Motor neuron (in vitro differentiated cells): ENCODE measurements at regions of chr7 and their contacts with region 1.

Region 1: DNA sequence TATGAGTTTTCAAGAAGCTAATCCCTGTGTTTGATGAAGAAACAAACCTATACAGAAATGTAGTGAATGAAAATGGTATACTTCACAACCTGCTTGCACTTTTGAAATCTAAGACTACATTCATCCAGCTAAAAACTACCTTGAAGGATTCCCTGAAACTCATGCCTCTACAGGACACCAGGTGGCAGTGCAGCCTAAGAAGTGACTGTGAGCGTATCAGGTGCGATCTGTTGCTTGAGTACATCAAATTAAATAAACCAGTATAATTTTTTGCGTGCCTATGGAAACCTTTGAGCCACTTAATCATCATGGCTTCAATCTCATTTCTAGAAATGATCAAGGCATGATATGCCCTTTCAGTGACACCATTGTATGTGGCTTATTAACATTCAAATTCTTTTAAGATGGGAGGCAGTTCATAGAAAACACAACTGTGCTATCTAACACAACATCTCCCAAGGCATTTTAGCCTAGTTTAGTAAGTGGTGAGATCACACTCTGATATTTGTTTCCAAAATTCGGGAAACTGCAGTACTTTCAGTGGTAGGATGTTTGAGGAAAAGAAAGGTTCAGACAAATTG is 57.4 kb downstream of the PPP1R17 start:
- ATAC-seq: peak; percentile 5 to 81 (median 66)
- H3K4me3 ChIP-seq: no peak overlapping the region
- H3K27ac ChIP-seq: no peak overlapping the region
- H3K4me1 ChIP-seq: no peaks in the 10 kb centered on the region

Region 2: GRCh38 chr7:31134246-31135188 is 609.9 kb before region 1 on chr7:
- in situ Hi-C with region 1: loop called in 6 of 9 experiments (anchors 10 to 25 kb)
- ATAC-seq: peak; percentile 99 to 100 (median 100)
- H3K4me3 ChIP-seq: no peak overlapping the region
- H3K27ac ChIP-seq: no peak overlapping the region
- H3K4me1 ChIP-seq: no peaks in the 10 kb centered on the region

Region 3: DNA sequence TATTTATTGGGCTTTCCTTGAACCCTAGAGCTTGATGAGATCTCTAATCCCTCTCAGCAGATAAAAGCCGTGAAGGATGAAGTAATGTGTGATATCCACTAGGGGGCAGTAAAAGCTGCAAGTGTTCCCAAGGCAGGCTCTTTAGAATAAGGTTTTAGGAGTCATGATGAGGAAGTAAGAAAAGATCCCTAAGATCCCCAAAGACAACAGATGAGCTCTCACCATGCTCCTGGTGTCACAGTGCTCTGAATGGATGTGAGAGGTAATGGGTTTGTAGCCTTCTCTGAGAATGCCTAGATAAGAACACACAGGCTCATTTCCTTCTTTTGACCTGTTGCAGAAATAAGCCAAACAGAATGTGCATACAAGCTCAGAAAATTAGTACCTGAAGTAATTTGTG is 300.9 kb before region 1 on chr7:
- in situ Hi-C with region 1: loop called in 5 of 9 experiments (anchors 25 kb)
- ATAC-seq: peak; percentile 44 to 78 (median 68)
- H3K4me3 ChIP-seq: no peak overlapping the region
- H3K27ac ChIP-seq: no peak overlapping the region
- H3K4me1 ChIP-seq: no peaks in the 10 kb centered on the region

Region 4: GRCh38 chr7:32204361-32205018 is 460.1 kb after region 1 on chr7:
- in situ Hi-C with region 1: loop called in 8 of 9 experiments (anchors 5 to 10 kb)
- ATAC-seq: peak; percentile 82 to 100 (median 98)
- H3K4me3 ChIP-seq: no peak overlapping the region
- H3K27ac ChIP-seq: no peak overlapping the region
- H3K4me1 ChIP-seq: no peaks in the 10 kb centered on the region

Region 5: DNA sequence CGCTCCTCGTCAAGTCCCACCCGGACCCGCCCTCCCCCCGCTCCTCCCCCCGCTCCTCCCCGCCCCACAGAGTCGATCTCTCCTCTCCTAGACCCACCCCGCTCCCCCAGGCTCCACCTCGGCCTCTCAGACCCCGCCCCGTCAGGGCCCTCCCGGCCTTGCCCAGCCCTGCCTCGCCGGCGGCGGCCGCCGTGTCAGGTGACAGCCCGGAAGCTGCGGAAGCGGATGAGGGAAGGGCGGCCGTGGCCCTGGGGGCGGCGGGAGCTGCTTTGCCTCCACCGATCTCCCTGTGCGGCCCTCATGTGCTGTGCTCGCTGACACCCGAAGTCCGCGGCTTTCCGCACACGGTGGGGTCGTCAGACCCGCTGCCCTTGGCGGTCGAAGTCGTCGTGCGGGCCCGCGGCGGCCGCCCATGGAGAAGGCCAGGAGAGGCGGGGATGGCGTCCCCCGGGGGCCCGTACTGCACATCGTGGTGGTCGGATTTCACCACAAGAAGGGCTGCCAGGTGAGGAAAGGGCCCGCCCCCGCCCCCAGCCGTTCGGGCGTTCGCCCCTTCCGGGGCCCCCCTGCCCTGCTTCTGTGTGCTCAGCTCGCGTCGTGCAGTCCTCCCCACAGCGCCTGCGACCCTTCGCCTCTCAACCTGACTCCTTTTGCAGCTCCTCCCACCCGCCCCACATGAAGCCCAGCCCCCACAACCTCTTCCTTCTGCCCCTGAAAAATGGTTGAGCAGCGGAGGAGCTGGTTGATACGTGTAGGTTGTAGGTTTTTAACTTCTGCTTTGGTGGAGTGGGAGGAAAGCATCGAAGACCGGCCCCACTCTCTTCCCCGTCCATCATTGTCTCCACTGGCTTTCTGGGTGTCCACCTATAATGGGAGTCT is 751.2 kb after region 1 on chr7 and contains the start of gene AVL9:
- in situ Hi-C with region 1: loop called in 1 of 9 experiments (anchors 25 kb)
- ATAC-seq: peak; percentile 87 to 98 (median 96)
- H3K4me3 ChIP-seq: peak within 1 kb of the TSS; percentile 66 to 100 (median 94)
- H3K27ac ChIP-seq: peak within 1 kb of the TSS; percentile 95 to 98
- H3K4me1 ChIP-seq: peaks cover 3 to 8% of the 10 kb centered on the region in 2 donors
- total RNA-seq, gene AVL9: 21.3 to 38.4 (median 32.9) TPM